ENCODE measurements at regions of chr11 and their contacts with region 1.

Region 1: GRCh38 chr11:72179804-72180396 is 12.0 kb upstream of the FOLR1 start:
- DNase-seq: no peak
- H3K4me3 ChIP-seq: no peak overlapping the region
- H3K4me3 Mint-ChIP-seq: no peak overlapping the region
- H3K27ac Mint-ChIP-seq: peak overlapping the region; percentile 40
- H3K4me1 ChIP-seq: peaks cover 24% of the 10 kb centered on the region
- H3K4me1 Mint-ChIP-seq: peaks cover 27% of the 10 kb centered on the region
- H3K27me3 ChIP-seq: no peaks in the 10 kb centered on the region
- H3K27me3 Mint-ChIP-seq: no peaks in the 10 kb centered on the region
- CTCF ChIP-seq: no peak

Region 2: DNA sequence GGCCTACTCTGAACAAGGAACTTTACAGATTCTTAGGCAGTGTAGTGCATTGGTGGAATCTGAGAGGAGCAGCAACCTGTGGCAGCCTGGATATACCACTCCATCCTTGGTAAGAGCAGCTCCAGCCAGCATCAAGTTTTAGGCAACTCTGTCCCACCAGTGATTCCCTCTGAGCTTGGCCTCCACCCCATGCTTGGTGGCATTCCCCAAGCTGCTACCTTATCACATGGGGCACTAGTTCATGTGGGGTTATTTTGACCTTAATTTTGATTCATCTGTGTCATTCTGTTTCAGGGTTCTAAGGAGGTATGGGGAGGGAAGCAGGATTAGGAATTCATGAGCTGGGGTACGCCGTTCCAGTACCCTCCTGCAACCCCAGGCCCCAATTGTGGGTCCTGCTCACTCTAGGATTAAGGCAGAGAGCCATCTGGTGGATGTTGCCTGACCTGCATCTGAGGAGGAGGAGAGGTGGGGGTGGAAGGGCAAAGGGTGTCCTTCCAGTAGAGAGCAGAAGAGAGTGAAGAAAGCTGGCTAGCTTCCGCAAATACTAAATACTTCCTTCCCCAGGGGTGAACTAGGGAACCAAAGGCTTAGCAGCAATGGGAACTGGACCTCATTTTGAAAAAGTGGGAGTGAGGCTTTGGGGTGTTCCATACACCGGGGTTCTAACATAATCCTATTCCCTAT is 88.8 kb before region 1 on chr11:
- CTCF ChIA-PET with region 1: interaction called, 9 read pairs
- POLR2A ChIA-PET with region 1: no interaction called
- intact Hi-C with region 1: loop called (anchors 1 kb)
- DNase-seq: peak; percentile 88 to 91
- H3K4me3 ChIP-seq: no peak overlapping the region
- H3K4me3 Mint-ChIP-seq: no peak overlapping the region
- H3K27ac Mint-ChIP-seq: no peak overlapping the region
- H3K4me1 ChIP-seq: peaks cover 6% of the 10 kb centered on the region
- H3K4me1 Mint-ChIP-seq: peaks cover 14% of the 10 kb centered on the region
- H3K27me3 ChIP-seq: no peaks in the 10 kb centered on the region
- H3K27me3 Mint-ChIP-seq: no peaks in the 10 kb centered on the region
- CTCF ChIP-seq: peak; percentile 97 to 99

Region 3: GRCh38 chr11:72112321-72113219 is 67.3 kb before region 1 on chr11 and contains the start of gene ANAPC15:
- CTCF ChIA-PET with region 1: interaction called, 4 read pairs
- POLR2A ChIA-PET with region 1: no interaction called
- intact Hi-C with region 1: loop called (anchors 1 kb)
- DNase-seq: peak; percentile 99 to 100
- H3K4me3 ChIP-seq: peak within 1 kb of the TSS; percentile 52
- H3K4me3 Mint-ChIP-seq: peak within 1 kb of the TSS; percentile 94
- H3K27ac Mint-ChIP-seq: peak within 1 kb of the TSS; percentile 100
- H3K4me1 ChIP-seq: peaks cover 9% of the 10 kb centered on the region
- H3K4me1 Mint-ChIP-seq: no peaks in the 10 kb centered on the region
- H3K27me3 ChIP-seq: no peaks in the 10 kb centered on the region
- H3K27me3 Mint-ChIP-seq: no peaks in the 10 kb centered on the region
- CTCF ChIP-seq: no peak
- total RNA-seq, gene ANAPC15: 98.6 and 105 TPM in 2 replicates

Region 4: DNA sequence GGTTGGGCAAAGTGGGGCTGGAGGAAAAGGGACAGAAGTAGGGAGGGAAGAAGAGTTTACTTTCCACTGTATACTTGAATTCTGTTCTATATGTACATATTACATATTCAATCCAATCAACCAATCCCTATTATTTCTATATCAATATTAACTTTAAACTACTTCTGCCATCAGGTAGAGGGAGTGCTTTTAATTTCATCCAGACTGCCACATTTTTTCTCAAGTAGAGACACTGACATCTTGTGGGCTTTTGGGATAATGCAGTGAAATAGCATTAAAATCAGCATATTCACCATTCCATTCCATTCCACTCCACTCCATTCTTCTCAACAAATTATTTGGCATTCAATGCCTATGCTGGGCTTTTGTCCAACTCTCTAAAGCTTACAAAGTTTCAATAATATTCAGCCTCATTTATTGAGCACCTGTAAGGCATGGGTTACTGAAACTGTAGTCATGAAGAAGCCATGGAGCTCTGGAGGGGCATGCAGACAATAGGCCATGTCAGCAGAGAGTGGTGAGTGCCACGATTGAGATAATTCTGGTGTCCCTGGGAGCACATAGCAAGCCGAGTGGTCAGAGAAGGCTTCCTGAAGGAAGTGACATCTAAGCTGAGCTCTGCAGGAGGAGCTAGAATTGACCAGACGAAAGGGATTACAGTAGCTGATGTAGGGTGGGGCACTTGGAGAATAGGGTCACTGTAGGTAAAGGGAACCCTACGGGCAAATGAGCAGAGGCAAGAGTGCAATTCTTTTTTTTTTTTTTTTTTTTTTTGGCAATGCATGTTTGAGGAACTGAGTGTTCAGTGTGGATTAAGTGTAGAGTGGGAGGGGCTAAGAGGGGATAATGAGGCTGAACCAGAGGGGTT is 267.2 kb after region 1 on chr11:
- CTCF ChIA-PET with region 1: interaction called, 11 read pairs
- POLR2A ChIA-PET with region 1: no interaction called
- intact Hi-C with region 1: no loop called
- DNase-seq: peak in 1 of 2 experiments; percentile 68
- H3K4me3 ChIP-seq: no peak overlapping the region
- H3K4me3 Mint-ChIP-seq: no peak overlapping the region
- H3K27ac Mint-ChIP-seq: no peak overlapping the region
- H3K4me1 ChIP-seq: no peaks in the 10 kb centered on the region
- H3K4me1 Mint-ChIP-seq: no peaks in the 10 kb centered on the region
- H3K27me3 ChIP-seq: no peaks in the 10 kb centered on the region
- H3K27me3 Mint-ChIP-seq: peaks cover 10% of the 10 kb centered on the region
- CTCF ChIP-seq: peak; percentile 93 to 96